Right cardiac atrium (tissue), 5 donors: ENCODE measurements at regions of chr10 and their contacts with region 1.

Region 1: GRCh38 chr10:71494980-71495381 is 98.3 kb downstream of the CDH23 start:
- DNase-seq: no peak
- ATAC-seq: no peak
- H3K4me3 ChIP-seq: no peak overlapping the region
- H3K27ac ChIP-seq: no peak overlapping the region
- H3K4me1 ChIP-seq: no peaks in the 10 kb centered on the region
- H3K27me3 ChIP-seq: no peaks in the 10 kb centered on the region

Region 2: DNA sequence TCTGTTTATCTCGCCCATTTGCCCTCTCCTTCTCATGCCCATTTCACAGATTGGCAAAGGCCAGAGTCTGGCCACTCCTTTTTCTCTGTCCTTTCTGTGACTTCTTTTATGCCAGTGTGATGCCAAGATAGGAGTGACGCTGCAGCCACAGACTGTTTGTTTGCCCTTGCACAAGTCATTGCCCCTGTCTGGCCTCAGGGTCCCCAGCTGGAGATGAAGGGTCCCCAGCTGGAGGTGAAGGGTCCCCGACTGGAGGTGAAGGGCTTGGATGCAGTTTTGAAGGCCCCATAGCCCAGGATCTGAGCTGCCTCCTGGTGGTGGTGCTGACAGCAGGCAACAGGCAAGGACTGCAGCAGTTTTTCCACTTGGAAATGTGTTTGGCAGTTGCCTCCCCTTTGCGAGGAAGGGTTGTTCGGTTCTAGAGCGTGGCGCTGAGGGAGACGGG is 226.7 kb before region 1 on chr10:
- intact Hi-C with region 1: no loop called
- DNase-seq: peak; percentile 59 to 78 (median 74)
- ATAC-seq: peak; percentile 32 to 41
- H3K4me3 ChIP-seq: no peak overlapping the region
- H3K27ac ChIP-seq: peak overlapping the region; percentile 62
- H3K4me1 ChIP-seq: peaks cover 18% of the 10 kb centered on the region
- H3K27me3 ChIP-seq: no peaks in the 10 kb centered on the region

Region 3: GRCh38 chr10:71333129-71333887 is 161.7 kb before region 1 on chr10:
- intact Hi-C with region 1: no loop called
- DNase-seq: peak in 1 of 3 donors; percentile 43
- ATAC-seq: peak in 1 of 2 donors; percentile 18
- H3K4me3 ChIP-seq: no peak overlapping the region
- H3K27ac ChIP-seq: no peak overlapping the region
- H3K4me1 ChIP-seq: no peaks in the 10 kb centered on the region
- H3K27me3 ChIP-seq: no peaks in the 10 kb centered on the region

Region 4: DNA sequence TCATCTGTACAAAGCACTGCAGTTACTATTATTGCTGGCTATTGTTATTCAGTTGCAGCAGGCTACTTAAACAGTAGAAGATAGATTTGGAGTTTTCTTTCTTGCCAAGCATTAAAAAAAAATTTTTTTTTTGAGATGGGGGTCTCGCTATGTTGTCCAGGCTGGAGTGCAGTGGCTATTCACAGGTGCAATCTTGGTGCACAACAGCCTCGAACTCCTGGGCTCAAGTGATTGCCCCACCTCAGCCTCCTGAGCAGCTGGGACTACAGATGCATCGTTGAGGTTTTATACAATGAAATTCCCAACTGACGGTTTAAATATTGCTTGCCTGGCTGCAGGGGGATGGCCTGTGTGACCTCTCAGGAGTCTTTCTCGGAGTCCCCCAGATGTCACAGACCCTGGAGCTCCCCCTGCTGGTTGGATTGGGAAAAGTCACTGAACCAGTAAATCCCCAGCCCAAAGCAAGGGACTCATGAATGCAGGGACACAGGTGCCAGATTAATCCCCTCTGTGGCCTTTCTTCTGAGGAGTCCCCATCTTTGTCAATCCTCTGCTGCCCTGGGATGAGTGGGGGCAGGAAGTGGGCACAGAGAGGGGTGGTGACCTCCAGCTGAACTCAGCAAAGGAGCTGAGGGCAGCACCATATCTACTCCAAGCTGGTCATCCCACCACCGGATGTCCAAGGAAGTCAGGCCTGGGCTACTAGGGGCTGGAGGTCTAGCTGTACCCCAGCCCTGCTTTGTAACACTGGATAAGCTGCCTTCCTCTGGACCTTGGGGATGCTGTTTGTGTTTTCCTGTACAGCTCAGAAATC is 75.0 kb after region 1 on chr10:
- intact Hi-C with region 1: loop called in 1 of 4 experiments (anchors 10 kb)
- DNase-seq: peak; percentile 65 to 87 (median 77)
- ATAC-seq: peak; percentile 37 to 64
- H3K4me3 ChIP-seq: no peak overlapping the region
- H3K27ac ChIP-seq: no peak overlapping the region
- H3K4me1 ChIP-seq: no peaks in the 10 kb centered on the region
- H3K27me3 ChIP-seq: no peaks in the 10 kb centered on the region